ENCODE measurements at regions of chr6 and their contacts with region 1.

Region 1: DNA sequence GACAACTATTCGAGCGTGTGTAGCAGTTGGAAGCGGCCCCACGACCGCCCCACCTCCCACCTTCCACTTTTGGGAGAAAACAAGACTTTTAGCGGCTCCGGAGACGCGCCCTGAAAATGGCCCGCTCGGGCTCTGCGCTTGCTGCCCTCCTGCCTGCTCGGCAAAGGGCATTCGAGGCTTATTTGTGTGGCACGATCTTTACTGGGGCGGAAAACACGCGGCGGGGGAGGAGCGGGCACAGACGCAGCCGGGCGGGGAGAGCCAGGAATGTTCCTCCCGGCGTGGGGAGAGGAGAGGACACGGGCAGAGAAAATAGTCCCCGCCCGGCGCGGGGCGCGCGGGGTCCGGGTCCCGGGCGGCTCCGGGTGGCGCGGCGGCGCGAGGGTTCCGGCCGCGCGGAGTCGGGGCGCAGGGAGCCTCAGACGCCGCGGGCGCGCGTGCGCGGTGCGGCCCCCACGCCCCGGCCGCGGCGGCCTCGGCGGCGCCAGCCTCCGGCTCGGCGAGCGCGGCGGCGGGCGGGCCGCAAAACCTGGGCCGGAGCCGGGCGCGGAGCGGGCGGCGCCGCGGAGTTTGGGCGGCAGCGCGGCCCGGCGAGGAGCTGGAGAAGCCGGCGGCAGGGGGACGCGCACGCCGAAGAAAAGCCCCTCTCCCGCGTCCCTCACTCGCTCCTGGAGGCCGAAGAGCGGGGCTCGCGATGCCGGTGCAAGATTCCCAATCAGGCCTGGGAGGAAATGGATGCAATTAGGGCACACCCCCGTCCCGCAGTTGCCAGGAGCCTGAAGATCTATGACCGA is 90.0 kb upstream of the ARID1B start:
- DNase-seq: peak; percentile 77
- H3K4me3 Mint-ChIP-seq: peak overlapping the region; percentile 77
- H3K27ac Mint-ChIP-seq: peak overlapping the region; percentile 73
- H3K4me1 Mint-ChIP-seq: peaks cover 24% of the 10 kb centered on the region
- H3K27me3 Mint-ChIP-seq: no peaks in the 10 kb centered on the region

Region 2: GRCh38 chr6:156719720-156720563 is 32.8 kb after region 1 on chr6:
- CTCF ChIA-PET with region 1: interaction called, 3 read pairs
- POLR2A ChIA-PET with region 1: no interaction called
- intact Hi-C with region 1: loop called (anchors 2 kb)
- DNase-seq: peak; percentile 80
- H3K4me3 Mint-ChIP-seq: peak overlapping the region; percentile 70
- H3K27ac Mint-ChIP-seq: peak overlapping the region; percentile 54
- H3K4me1 Mint-ChIP-seq: peaks cover 17% of the 10 kb centered on the region
- H3K27me3 Mint-ChIP-seq: no peaks in the 10 kb centered on the region

Region 3: DNA sequence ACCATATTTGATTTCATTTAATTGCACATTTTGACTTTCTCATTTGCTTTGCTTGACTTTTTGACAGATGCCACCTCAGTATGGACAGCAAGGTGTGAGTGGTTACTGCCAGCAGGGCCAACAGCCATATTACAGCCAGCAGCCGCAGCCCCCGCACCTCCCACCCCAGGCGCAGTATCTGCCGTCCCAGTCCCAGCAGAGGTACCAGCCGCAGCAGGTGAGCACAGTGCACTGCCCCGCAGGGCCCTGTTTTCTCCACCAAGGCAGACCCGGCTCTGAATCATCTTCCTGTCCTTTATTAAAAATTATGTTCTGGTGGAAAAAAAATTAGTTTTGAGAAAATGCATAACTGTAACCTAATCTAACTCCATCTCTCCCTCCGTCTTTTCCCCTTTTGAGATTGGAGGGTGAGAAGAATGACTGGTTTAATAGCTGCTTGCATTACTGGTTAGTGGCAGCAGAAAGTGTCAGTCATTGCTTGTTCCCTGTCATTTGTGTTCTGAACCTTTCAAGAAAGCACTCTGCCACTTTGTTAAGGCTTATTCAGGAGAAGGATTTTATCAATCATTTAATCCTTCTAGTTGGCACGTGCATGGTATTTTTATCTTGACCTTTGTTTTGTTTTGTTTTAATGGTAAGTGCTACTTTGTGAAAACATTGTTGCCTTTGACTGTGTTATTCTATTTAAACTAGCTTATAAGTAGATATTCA is 214.3 kb after region 1 on chr6:
- CTCF ChIA-PET with region 1: no interaction called
- POLR2A ChIA-PET with region 1: no interaction called
- intact Hi-C with region 1: no loop called
- DNase-seq: no peak
- H3K4me3 Mint-ChIP-seq: no peak overlapping the region
- H3K27ac Mint-ChIP-seq: no peak overlapping the region
- H3K4me1 Mint-ChIP-seq: peaks cover 44% of the 10 kb centered on the region
- H3K27me3 Mint-ChIP-seq: no peaks in the 10 kb centered on the region

Measured in activated CD4-positive, alpha-beta memory T cell treated with anti-CD3 and anti-CD28 coated beads for 36 hours (primary cell).